Naive thymus-derived CD4-positive, alpha-beta T cell (primary cell): ENCODE measurements at regions of chr15 and their contacts with region 1.

Region 1: GRCh38 chr15:61871926-61872522 is 188.2 kb downstream of the VPS13C start:
- DNase-seq: peak in 2 of 9 donors; percentile 13 to 15
- ATAC-seq: peak; percentile 52
- H3K4me3 ChIP-seq: no peak overlapping the region
- H3K4me3 Mint-ChIP-seq: no peak overlapping the region
- H3K27ac ChIP-seq: no peak overlapping the region
- H3K27ac Mint-ChIP-seq: peak overlapping the region in 1 of 9 donors; percentile 42
- H3K4me1 ChIP-seq: no peaks in the 10 kb centered on the region
- H3K4me1 Mint-ChIP-seq: peaks cover 0 to 8% (median 0%) of the 10 kb centered on the region in 7 donors
- H3K27me3 ChIP-seq: no peaks in the 10 kb centered on the region
- H3K27me3 Mint-ChIP-seq: no peaks in the 10 kb centered on the region

Region 2: GRCh38 chr15:61309031-61309511 is 563.0 kb before region 1 on chr15:
- CTCF ChIA-PET with region 1: no interaction called
- POLR2A ChIA-PET with region 1: no interaction called
- intact Hi-C with region 1: no loop called
- DNase-seq: no peak
- ATAC-seq: no peak
- H3K4me3 ChIP-seq: no peak overlapping the region
- H3K4me3 Mint-ChIP-seq: no peak overlapping the region
- H3K27ac ChIP-seq: no peak overlapping the region
- H3K27ac Mint-ChIP-seq: no peak overlapping the region
- H3K4me1 ChIP-seq: no peaks in the 10 kb centered on the region
- H3K4me1 Mint-ChIP-seq: no peaks in the 10 kb centered on the region
- H3K27me3 ChIP-seq: no peaks in the 10 kb centered on the region
- H3K27me3 Mint-ChIP-seq: peaks cover 2 to 26% (median 13%) of the 10 kb centered on the region in 5 donors

Region 3: GRCh38 chr15:62125773-62126172 is 253.7 kb after region 1 on chr15:
- CTCF ChIA-PET with region 1: no interaction called
- POLR2A ChIA-PET with region 1: no interaction called
- intact Hi-C with region 1: no loop called
- DNase-seq: no peak
- ATAC-seq: no peak
- H3K4me3 ChIP-seq: no peak overlapping the region
- H3K4me3 Mint-ChIP-seq: no peak overlapping the region
- H3K27ac ChIP-seq: no peak overlapping the region
- H3K27ac Mint-ChIP-seq: peak overlapping the region in 2 of 9 donors; percentile 0 to 64
- H3K4me1 ChIP-seq: peaks cover 12 to 15% of the 10 kb centered on the region in 2 donors
- H3K4me1 Mint-ChIP-seq: peaks cover 32 to 44% (median 39%) of the 10 kb centered on the region in 7 donors
- H3K27me3 ChIP-seq: no peaks in the 10 kb centered on the region
- H3K27me3 Mint-ChIP-seq: peaks cover 0 to 10% (median 0%) of the 10 kb centered on the region in 5 donors

Region 4: GRCh38 chr15:62254137-62254934 is 382.3 kb after region 1 on chr15:
- CTCF ChIA-PET with region 1: no interaction called
- POLR2A ChIA-PET with region 1: no interaction called
- intact Hi-C with region 1: loop called in 1 of 2 experiments (anchors 1 kb)
- DNase-seq: peak; percentile 4 to 72 (median 23)
- ATAC-seq: peak; percentile 53
- H3K4me3 ChIP-seq: no peak overlapping the region
- H3K4me3 Mint-ChIP-seq: no peak overlapping the region
- H3K27ac ChIP-seq: no peak overlapping the region
- H3K27ac Mint-ChIP-seq: no peak overlapping the region
- H3K4me1 ChIP-seq: no peaks in the 10 kb centered on the region
- H3K4me1 Mint-ChIP-seq: no peaks in the 10 kb centered on the region
- H3K27me3 ChIP-seq: no peaks in the 10 kb centered on the region
- H3K27me3 Mint-ChIP-seq: peaks cover 0 to 29% (median 11%) of the 10 kb centered on the region in 5 donors